Calu3 (cell line): ENCODE measurements at regions of chr1 and their contacts with region 1.

Region 1: DNA sequence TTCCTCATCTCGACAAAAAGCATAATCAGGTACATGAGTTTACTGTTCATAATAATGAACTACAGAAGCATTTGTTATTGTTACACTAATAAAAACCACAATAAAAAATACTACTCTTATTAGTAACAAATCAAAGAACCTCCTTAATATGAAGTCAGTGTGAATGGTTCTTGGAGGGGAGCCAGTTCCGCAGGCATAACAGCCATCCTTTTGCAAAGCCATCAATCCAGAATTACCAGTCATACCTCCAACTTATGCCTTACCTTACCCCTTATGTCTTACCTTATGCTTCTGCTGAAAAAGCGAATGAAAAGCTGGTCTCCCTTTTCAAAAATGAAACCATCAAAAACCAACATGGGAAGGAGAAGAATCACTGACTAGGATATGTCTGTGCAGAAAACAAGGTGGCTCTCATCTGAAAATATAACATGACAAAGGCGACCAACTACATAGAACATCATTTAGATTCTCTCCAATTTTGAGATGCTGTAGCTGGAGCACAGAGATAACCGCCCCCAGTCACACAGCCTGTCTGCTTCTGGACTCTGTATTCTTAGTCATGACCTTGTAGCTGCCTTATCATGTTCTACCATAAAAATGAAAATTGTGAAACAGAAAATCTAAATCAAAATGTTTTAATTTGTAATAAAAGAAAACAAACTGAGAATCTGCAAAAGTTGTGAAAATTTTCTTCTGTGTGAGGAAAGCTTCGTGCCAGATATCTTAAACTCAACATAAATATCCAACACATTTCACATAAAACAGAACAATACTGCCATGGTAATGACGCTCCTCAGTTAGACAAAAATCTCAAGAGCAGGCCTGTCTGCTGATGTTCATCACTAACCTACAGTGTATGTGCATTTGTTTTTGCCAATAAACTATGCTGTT is 438.2 kb downstream of the SMYD3 start:
- DNase-seq: no peak
- H3K4me3 Mint-ChIP-seq: no peak overlapping the region
- H3K27ac Mint-ChIP-seq: no peak overlapping the region
- H3K4me1 Mint-ChIP-seq: no peaks in the 10 kb centered on the region
- H3K27me3 Mint-ChIP-seq: no peaks in the 10 kb centered on the region
- CTCF ChIP-seq: no peak

Region 2: DNA sequence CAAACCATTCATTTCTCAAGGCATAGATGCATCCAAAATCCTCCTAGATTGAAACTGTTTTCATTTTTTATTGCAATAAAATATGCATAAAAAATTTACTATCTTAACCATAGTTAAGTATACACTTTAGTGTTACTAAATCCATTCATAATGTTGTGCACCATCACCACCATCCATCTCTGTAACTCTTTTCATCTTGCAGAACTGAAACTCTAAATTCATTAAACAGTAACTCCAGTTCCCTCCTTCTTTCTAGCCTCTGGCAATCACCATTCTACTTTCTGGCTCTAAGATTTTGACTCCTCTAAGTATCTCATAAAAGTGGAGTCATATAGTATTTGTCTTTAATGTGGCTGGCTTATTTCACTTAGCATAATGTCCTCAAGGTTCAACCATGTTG is 201.4 kb after region 1 on chr1:
- CTCF ChIA-PET with region 1: interaction called, 11 read pairs
- intact Hi-C with region 1: no loop called
- DNase-seq: no peak
- H3K4me3 Mint-ChIP-seq: no peak overlapping the region
- H3K27ac Mint-ChIP-seq: no peak overlapping the region
- H3K4me1 Mint-ChIP-seq: no peaks in the 10 kb centered on the region
- H3K27me3 Mint-ChIP-seq: no peaks in the 10 kb centered on the region
- CTCF ChIP-seq: no peak